ENCODE measurements at regions of chr10 and their contacts with region 1.

Region 1: DNA sequence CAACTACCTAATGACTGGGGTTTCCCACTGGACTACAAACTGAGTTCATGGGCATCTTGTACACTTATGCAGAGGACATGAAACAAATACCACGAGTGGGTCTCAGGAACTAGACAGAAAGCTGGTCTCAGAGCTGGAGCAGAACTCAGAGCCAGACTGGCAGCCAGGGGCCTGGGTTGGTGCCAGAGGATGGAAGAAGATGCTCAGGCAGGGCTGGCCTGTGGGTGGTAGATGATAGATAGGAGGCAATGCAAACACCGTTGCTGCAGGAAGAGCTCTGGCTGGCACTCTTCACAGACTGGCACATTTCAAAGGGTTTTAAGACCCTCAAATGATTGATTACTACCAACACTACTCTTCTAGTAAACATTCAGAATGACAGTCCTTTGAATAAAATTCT is 28.8 kb downstream of the ENO4 start:
- DNase-seq: no peak
- H3K4me3 Mint-ChIP-seq: no peak overlapping the region
- H3K27ac Mint-ChIP-seq: no peak overlapping the region
- H3K4me1 Mint-ChIP-seq: no peaks in the 10 kb centered on the region
- H3K27me3 Mint-ChIP-seq: no peaks in the 10 kb centered on the region

Region 2: DNA sequence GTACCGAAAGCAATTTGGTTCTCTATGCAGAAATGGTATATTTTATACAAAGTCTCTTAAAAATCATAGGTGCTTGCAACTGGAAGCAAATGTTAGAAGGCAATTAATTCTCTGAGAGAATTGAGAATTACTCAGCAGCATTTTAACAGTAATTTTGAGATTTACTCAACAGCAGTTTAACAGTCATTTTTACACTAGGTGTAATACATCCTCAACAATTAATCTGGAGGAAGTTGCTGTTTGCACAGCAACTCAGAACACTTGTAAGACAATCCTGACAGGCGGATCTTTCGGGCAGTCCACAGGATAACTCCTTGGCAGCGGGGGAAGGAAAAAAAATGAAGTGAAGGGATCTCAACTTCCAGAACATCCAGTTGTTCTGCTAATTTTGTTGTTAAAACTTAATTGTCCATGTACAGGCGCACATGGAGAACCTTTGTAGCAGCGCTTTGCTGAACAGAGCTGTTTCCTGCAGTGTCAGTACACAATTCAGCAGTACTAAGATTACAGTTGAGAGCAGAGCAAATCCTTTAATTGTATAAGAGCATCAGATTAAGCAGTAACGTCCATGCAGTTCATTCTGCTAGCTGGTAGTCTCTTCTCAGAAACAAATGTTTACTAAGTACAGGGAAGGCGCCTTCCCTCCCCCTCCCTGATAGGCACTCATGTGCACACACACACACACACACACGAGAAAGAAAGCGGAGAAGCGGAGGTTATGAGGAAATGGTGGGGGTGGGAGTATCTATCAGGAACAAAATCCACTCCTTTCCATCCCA is 15.0 kb after region 1 on chr10:
- intact Hi-C with region 1: loop called (anchors 1 kb)
- DNase-seq: no peak
- H3K4me3 Mint-ChIP-seq: no peak overlapping the region
- H3K27ac Mint-ChIP-seq: no peak overlapping the region
- H3K4me1 Mint-ChIP-seq: no peaks in the 10 kb centered on the region
- H3K27me3 Mint-ChIP-seq: peaks cover 14% of the 10 kb centered on the region